Activated CD8-positive, alpha-beta T cell treated with anti-CD3 and anti-CD28 coated beads, Interleukin-2, amount 10 ng/mL, durations not matched to agents 7 days and 5 days (primary cell): ENCODE measurements at regions of chr12 and their contacts with region 1.

Region 1: DNA sequence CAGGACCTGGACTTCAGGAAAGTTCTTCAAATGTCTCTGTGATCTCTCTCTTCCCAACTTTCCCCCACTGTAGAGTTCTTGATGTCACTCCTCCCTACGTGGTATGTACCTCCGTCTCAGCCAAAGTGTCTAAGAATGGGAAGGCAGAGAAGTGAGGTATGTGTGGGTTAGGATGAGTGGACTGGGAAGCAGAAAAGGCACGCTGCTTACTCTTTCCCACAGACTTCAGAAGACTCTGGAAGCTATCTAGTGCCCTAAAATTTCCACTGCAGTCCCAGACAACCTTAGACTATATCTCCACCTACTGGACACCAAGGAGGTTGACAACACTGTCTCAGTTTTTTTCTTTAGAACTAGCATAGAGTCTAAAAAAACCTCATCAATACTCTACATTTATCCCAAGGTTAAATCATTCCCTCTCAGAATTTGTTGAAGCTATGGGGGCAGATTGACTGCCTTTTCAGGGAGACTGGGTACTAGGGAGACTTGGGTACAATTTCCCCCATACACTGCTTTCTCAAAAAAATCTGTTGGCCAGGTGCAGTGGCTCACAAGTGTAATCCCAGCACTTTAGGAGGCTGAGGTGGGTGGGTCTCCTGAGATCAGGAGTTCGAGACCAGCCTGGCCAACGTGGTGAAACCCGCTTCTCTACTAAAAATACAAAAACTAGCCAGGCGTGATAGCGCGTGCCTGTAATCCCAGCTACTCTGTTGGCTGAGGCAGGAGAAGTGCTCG is 20.6 kb upstream of the ITGA5 start:
- DNase-seq: no peak
- ATAC-seq: peak; percentile 86
- H3K4me3 Mint-ChIP-seq: no peak overlapping the region
- H3K27ac Mint-ChIP-seq: peak overlapping the region; percentile 23
- H3K4me1 Mint-ChIP-seq: peaks cover 6% of the 10 kb centered on the region
- H3K27me3 Mint-ChIP-seq: peaks cover 12% of the 10 kb centered on the region

Region 2: GRCh38 chr12:54419088-54419892 is 20.4 kb before region 1 on chr12 and contains the start of gene ITGA5:
- CTCF ChIA-PET with region 1: interaction called, 123 read pairs
- POLR2A ChIA-PET with region 1: no interaction called
- DNase-seq: no peak
- ATAC-seq: peak; percentile 54
- H3K4me3 Mint-ChIP-seq: peak within 1 kb of the TSS; percentile 94
- H3K27ac Mint-ChIP-seq: peak within 1 kb of the TSS; percentile 91
- H3K4me1 Mint-ChIP-seq: peaks cover 54% of the 10 kb centered on the region
- H3K27me3 Mint-ChIP-seq: peaks cover 28% of the 10 kb centered on the region
- total RNA-seq, gene ITGA5: 65.0 to 69.1 TPM

Region 3: GRCh38 chr12:54428050-54429013 is 11.4 kb before region 1 on chr12:
- CTCF ChIA-PET with region 1: interaction called, 42 read pairs
- POLR2A ChIA-PET with region 1: no interaction called
- DNase-seq: no peak
- ATAC-seq: no peak
- H3K4me3 Mint-ChIP-seq: no peak overlapping the region
- H3K27ac Mint-ChIP-seq: peak overlapping the region; percentile 48
- H3K4me1 Mint-ChIP-seq: peaks cover 44% of the 10 kb centered on the region
- H3K27me3 Mint-ChIP-seq: peaks cover 34% of the 10 kb centered on the region

Region 4: GRCh38 chr12:54463034-54463433 is 23.3 kb after region 1 on chr12:
- CTCF ChIA-PET with region 1: interaction called, 13 read pairs
- POLR2A ChIA-PET with region 1: no interaction called
- DNase-seq: no peak
- ATAC-seq: no peak
- H3K4me3 Mint-ChIP-seq: no peak overlapping the region
- H3K27ac Mint-ChIP-seq: no peak overlapping the region
- H3K4me1 Mint-ChIP-seq: no peaks in the 10 kb centered on the region
- H3K27me3 Mint-ChIP-seq: peaks cover 38% of the 10 kb centered on the region